ENCODE measurements at regions of chr2 and their contacts with region 1.

Region 1: GRCh38 chr2:80048296-80048695 is 256.3 kb downstream of the LRRTM1 start:
- DNase-seq: no peak
- ATAC-seq: no peak
- H3K4me3 ChIP-seq: no peak overlapping the region
- H3K27ac ChIP-seq: no peak overlapping the region
- H3K4me1 ChIP-seq: no peaks in the 10 kb centered on the region
- H3K27me3 ChIP-seq: peaks cover 0 to 5% (median 0%) of the 10 kb centered on the region in 7 donors
- CTCF ChIP-seq: no peak

Region 2: GRCh38 chr2:79090693-79091092 is 957.6 kb before region 1 on chr2:
- intact Hi-C with region 1: loop called in 1 of 10 experiments (anchors 5 kb)
- DNase-seq: no peak
- ATAC-seq: no peak
- H3K4me3 ChIP-seq: no peak overlapping the region
- H3K27ac ChIP-seq: no peak overlapping the region
- H3K4me1 ChIP-seq: no peaks in the 10 kb centered on the region
- H3K27me3 ChIP-seq: no peaks in the 10 kb centered on the region
- CTCF ChIP-seq: no peak

Region 3: DNA sequence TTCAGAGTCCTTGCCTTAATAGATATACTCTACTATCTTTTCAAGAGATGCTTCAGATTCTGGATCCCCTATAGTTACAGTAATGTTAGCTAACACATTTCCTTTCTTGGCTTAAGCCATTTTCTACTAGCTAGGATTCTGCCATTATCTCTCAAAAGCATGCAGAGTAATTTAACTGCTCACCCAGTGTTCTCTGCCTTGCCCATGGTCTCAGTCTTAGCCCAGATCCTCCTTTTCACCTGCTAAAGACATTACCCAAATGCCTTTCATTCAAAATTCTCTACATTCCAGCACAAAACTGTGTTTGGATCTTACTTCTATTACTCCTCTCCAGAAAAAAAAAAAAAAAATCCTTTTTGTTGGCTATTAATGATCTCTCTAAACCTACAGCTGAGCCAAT is 730.4 kb after region 1 on chr2:
- intact Hi-C with region 1: no loop called
- DNase-seq: no peak
- ATAC-seq: no peak
- H3K4me3 ChIP-seq: no peak overlapping the region
- H3K27ac ChIP-seq: no peak overlapping the region
- H3K4me1 ChIP-seq: no peaks in the 10 kb centered on the region
- H3K27me3 ChIP-seq: no peaks in the 10 kb centered on the region
- CTCF ChIP-seq: no peak